Caco-2 (cell line): ENCODE measurements at regions of chr4 and their contacts with region 1.

Region 1: DNA sequence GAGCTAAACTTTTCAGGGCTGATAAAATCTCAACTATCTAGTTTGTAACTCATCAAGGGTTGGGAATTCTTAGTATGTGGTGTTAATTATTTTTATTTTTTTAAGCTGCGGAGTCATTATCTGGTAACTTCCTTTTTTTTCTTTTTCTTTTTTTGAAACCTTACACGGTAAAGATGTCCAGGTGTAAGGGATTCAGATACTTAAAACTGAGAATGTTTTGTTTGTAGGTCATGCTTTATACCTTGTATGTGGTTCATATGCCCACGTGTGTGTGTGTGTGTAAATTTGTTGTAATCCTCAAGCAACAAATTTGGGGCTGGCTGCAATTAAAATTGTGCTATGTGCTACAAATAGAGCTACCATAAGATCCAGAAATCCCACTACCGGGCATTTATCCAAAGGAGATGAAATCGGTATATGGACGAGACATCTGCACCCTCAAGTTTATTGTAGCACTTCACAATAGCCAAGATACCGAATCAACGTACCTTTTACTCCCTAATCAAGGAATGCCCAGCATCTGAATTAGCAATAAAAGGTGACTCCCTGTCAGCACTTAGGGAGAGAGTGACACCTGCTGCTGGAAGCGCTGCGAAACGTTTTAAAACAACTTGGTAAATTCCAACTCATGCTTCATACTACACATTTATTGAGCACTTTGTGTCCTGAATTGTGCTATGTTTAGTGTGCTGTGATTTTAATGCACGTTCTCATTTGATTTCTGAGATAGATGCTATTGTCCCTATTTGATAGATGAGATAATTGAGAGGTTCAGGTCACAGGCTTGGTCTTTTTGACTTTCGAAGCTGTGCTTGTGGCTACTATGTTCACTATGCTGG is 16.1 kb downstream of the MSMO1 start:
- DNase-seq: peak in 1 of 2 experiments; percentile 32
- H3K4me3 ChIP-seq: no peak overlapping the region
- H3K4me3 Mint-ChIP-seq: no peak overlapping the region
- H3K27ac Mint-ChIP-seq: no peak overlapping the region
- H3K4me1 ChIP-seq: no peaks in the 10 kb centered on the region
- H3K4me1 Mint-ChIP-seq: no peaks in the 10 kb centered on the region
- H3K27me3 ChIP-seq: no peaks in the 10 kb centered on the region
- H3K27me3 Mint-ChIP-seq: no peaks in the 10 kb centered on the region
- CTCF ChIP-seq: peak; percentile 38 to 45

Region 2: DNA sequence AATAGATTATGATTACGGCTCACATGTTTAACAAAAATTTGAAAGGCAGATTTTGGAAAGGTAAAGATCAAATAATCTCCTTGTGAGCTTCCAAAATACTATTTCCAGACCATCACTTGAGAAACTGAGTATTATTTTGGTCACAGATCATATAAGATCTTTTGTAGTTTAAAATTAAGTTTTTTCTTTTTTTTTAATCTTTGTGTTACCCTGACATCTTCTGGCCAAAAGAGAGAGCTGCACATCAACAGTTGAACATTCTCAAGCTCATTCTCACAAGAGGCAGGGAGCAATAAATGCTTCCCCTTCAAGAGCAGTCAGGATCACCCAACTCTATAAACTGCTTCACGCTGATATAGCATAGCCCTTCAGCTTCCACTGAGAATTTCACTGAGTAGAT is 246.8 kb before region 1 on chr4:
- CTCF ChIA-PET with region 1: no interaction called
- POLR2A ChIA-PET with region 1: no interaction called
- intact Hi-C with region 1: no loop called
- DNase-seq: peak in 1 of 2 experiments; percentile 18
- H3K4me3 ChIP-seq: no peak overlapping the region
- H3K4me3 Mint-ChIP-seq: no peak overlapping the region
- H3K27ac Mint-ChIP-seq: no peak overlapping the region
- H3K4me1 ChIP-seq: no peaks in the 10 kb centered on the region
- H3K4me1 Mint-ChIP-seq: no peaks in the 10 kb centered on the region
- H3K27me3 ChIP-seq: no peaks in the 10 kb centered on the region
- H3K27me3 Mint-ChIP-seq: no peaks in the 10 kb centered on the region
- CTCF ChIP-seq: peak; percentile 54 to 63

Region 3: GRCh38 chr4:165131247-165131832 is 212.2 kb before region 1 on chr4:
- CTCF ChIA-PET with region 1: interaction called, 11 read pairs
- POLR2A ChIA-PET with region 1: no interaction called
- intact Hi-C with region 1: loop called (anchors 1 kb)
- DNase-seq: peak; percentile 64 to 80
- H3K4me3 ChIP-seq: no peak overlapping the region
- H3K4me3 Mint-ChIP-seq: no peak overlapping the region
- H3K27ac Mint-ChIP-seq: no peak overlapping the region
- H3K4me1 ChIP-seq: no peaks in the 10 kb centered on the region
- H3K4me1 Mint-ChIP-seq: peaks cover 14% of the 10 kb centered on the region
- H3K27me3 ChIP-seq: no peaks in the 10 kb centered on the region
- H3K27me3 Mint-ChIP-seq: peaks cover 14% of the 10 kb centered on the region
- CTCF ChIP-seq: peak; percentile 73 to 82

Region 4: GRCh38 chr4:165207431-165208220 is 135.9 kb before region 1 on chr4 and contains the start of gene KLHL2:
- CTCF ChIA-PET with region 1: interaction called, 6 read pairs
- POLR2A ChIA-PET with region 1: no interaction called
- intact Hi-C with region 1: loop called (anchors 5 kb)
- DNase-seq: peak; percentile 74 to 83
- H3K4me3 ChIP-seq: peak within 1 kb of the TSS; percentile 85
- H3K4me3 Mint-ChIP-seq: peak within 1 kb of the TSS; percentile 74
- H3K27ac Mint-ChIP-seq: peak within 1 kb of the TSS; percentile 49
- H3K4me1 ChIP-seq: peaks cover 25% of the 10 kb centered on the region
- H3K4me1 Mint-ChIP-seq: peaks cover 27% of the 10 kb centered on the region
- H3K27me3 ChIP-seq: no peaks in the 10 kb centered on the region
- H3K27me3 Mint-ChIP-seq: no peaks in the 10 kb centered on the region
- CTCF ChIP-seq: no peak
- total RNA-seq, gene KLHL2: 14.5 and 15.9 TPM in 2 replicates

Region 5: DNA sequence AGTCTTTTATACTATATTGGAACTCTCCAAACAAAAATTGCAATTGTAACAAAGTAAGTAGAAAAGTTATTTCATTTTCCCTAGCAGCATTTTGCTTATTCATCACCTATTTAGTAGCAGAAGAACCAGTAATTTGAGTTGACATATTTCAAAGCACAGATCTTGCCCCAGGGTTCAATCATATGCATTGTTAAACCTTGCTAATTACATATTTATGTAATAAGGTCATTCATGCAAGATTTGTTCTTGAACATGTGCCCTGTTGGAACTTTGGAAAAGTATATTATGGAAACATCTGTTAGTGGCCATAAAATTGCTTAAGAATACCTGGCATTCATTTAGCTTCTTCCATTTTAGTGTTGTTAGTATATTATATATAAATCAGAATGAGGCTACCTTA is 721.1 kb after region 1 on chr4:
- CTCF ChIA-PET with region 1: no interaction called
- POLR2A ChIA-PET with region 1: no interaction called
- intact Hi-C with region 1: no loop called
- DNase-seq: no peak
- H3K4me3 ChIP-seq: no peak overlapping the region
- H3K4me3 Mint-ChIP-seq: no peak overlapping the region
- H3K27ac Mint-ChIP-seq: no peak overlapping the region
- H3K4me1 ChIP-seq: no peaks in the 10 kb centered on the region
- H3K4me1 Mint-ChIP-seq: no peaks in the 10 kb centered on the region
- H3K27me3 ChIP-seq: no peaks in the 10 kb centered on the region
- H3K27me3 Mint-ChIP-seq: no peaks in the 10 kb centered on the region
- CTCF ChIP-seq: no peak